ENCODE measurements at regions of chr3 and their contacts with region 1.

Region 1: GRCh38 chr3:43690400-43691119 is at the start of gene ABHD5:
- DNase-seq: peak; percentile 97
- H3K4me3 ChIP-seq: peak within 1 kb of the TSS; percentile 62 to 88 (median 87)
- H3K27ac ChIP-seq: peak within 1 kb of the TSS; percentile 76
- H3K4me1 ChIP-seq: peaks cover 12% of the 10 kb centered on the region
- H3K27me3 ChIP-seq: peaks cover 0 to 1% of the 10 kb centered on the region in 2 experiments
- CTCF ChIP-seq: peak; percentile 17 to 55
- POLR2A ChIP-seq: peak; percentile 100
- total RNA-seq, gene ABHD5: 17.1 and 21.2 TPM in 2 replicates

Region 2: DNA sequence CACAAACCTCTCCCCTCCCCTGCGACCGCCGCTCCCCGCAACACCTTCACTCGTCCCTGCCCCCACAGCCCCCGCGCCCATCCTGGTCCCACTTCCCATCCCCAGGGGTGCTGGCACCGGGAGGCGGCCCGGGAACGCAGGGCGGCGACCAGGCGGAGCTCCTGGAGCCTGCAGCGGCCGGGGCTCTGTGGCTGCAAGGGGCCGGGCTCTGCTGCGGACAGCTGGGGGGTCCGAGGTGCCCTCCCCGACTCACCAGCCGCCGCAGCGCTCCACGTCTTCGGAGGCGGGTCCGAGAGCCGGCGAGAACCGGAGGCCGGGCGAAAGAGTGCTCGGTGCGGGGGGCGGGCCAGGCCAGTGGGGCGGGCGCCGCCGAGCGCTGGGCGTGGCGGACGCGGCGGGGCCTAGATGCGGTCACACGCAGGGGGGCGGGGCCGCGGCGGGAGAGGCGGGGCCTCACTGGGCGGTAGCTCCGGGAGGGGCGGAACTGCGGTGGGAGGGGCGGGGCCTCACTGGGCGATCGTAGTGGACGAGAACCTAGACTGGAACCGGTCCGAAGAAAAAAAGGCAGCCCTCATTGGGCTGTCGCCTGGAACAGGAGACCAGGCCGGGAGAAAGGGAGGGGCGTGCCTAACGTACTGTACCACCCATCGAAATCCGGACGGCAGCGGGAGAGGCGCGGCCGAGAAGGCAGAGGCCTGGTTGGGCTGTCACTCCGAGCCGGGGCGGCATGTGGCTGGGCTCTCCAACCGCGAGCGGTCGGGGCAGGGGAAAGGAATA is 68.7 kb before region 1 on chr3 and contains the start of gene ANO10:
- CTCF ChIA-PET with region 1: no interaction called
- POLR2A ChIA-PET with region 1: interaction called, 3 read pairs
- dilution Hi-C with region 1: no loop called
- intact Hi-C with region 1: loop called (anchors 1 kb)
- DNase-seq: peak; percentile 99
- H3K4me3 ChIP-seq: peak within 1 kb of the TSS; percentile 75 to 83 (median 81)
- H3K27ac ChIP-seq: peak within 1 kb of the TSS; percentile 63
- H3K4me1 ChIP-seq: peaks cover 10% of the 10 kb centered on the region
- H3K27me3 ChIP-seq: no peaks in the 10 kb centered on the region
- CTCF ChIP-seq: no peak
- POLR2A ChIP-seq: peak; percentile 69
- total RNA-seq, gene ANO10: 40.9 and 45.8 TPM in 2 replicates

Region 3: DNA sequence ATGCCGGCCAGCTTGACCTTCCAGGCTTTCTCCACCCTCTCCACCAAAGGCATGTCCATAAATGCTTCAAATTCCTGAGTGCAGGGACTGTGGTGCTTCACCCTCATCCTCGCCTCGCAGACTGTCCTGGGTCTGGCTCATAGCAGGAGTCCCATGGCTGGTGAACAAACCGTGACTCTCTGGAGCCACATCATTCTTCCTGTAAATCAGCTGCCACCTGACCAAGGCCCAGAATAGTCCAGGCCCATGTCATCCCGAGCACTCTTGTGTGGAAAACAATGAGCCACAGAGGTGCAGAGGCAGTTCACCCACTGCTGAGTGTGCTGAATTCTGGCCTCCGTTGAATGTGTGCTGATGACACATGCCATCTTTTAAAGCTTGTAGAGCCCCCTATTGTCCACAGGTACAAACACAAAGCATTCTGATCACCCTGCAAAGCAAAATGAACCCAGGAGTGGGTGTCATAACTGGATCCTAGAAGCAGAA is 68.8 kb after region 1 on chr3:
- CTCF ChIA-PET with region 1: no interaction called
- POLR2A ChIA-PET with region 1: no interaction called
- dilution Hi-C with region 1: no loop called
- intact Hi-C with region 1: loop called (anchors 1 kb)
- DNase-seq: peak; percentile 65
- H3K4me3 ChIP-seq: no peak overlapping the region
- H3K27ac ChIP-seq: peak overlapping the region; percentile 1
- H3K4me1 ChIP-seq: peaks cover 23% of the 10 kb centered on the region
- H3K27me3 ChIP-seq: no peaks in the 10 kb centered on the region
- CTCF ChIP-seq: peak; percentile 8 to 22
- POLR2A ChIP-seq: no peak

Region 4: DNA sequence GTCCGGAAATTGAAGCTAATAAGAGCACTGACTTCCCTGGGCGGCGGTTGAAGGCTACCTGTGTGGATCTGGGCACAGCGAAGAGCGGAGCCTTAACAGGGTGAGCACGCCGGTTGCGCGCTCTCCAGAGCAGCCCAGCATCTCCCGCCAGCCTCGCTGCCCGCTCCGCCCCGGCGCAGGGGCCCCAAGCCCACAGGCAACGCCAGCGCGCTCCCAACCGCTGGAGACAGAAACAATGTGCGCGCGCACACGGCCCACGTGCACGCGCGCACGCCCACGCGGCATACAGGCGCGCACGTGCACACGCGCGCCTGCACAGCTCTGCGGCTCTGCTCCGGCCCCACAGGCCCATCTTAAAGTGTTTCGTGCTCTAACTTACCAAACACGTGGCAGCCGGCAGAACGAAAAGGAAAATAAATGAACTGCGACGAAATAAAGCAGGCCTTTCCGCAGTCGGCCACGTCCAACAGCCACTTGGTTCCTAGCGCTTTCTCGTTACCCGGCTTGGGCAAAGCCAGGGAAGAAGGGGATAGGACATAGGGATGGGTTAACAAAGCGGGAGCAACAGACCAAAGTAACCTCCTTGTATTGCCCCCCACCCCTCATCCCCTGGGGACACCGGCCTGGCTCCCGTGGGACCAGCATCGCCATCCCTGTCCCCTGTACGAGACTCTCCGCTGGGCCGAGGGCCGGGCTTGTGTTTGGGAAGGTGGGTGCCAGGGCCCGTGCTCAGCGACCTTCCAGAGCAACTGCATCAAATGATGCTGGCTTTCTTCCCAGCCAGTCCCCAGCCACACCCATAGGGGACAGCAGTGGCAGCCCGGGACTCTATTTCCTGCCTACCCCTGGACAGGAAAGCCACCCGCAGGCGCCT is 203.9 kb after region 1 on chr3:
- CTCF ChIA-PET with region 1: no interaction called
- POLR2A ChIA-PET with region 1: no interaction called
- dilution Hi-C with region 1: no loop called
- intact Hi-C with region 1: loop called (anchors 1 kb)
- DNase-seq: peak; percentile 77
- H3K4me3 ChIP-seq: peak overlapping the region; percentile 45 to 69 (median 57)
- H3K27ac ChIP-seq: peak overlapping the region; percentile 57
- H3K4me1 ChIP-seq: peaks cover 9% of the 10 kb centered on the region
- H3K27me3 ChIP-seq: peaks cover 10 to 30% of the 10 kb centered on the region in 2 experiments
- CTCF ChIP-seq: no peak
- POLR2A ChIP-seq: no peak

Region 5: GRCh38 chr3:44198284-44199269 is 508.0 kb after region 1 on chr3:
- CTCF ChIA-PET with region 1: no interaction called
- POLR2A ChIA-PET with region 1: no interaction called
- dilution Hi-C with region 1: no loop called
- intact Hi-C with region 1: loop called (anchors 2 kb)
- DNase-seq: peak; percentile 69
- H3K4me3 ChIP-seq: no peak overlapping the region
- H3K27ac ChIP-seq: no peak overlapping the region
- H3K4me1 ChIP-seq: no peaks in the 10 kb centered on the region
- H3K27me3 ChIP-seq: peaks cover 2 to 3% of the 10 kb centered on the region in 2 experiments
- CTCF ChIP-seq: peak; percentile 72 to 83
- POLR2A ChIP-seq: no peak